ENCODE measurements at regions of chr10 and their contacts with region 1.

Region 1: DNA sequence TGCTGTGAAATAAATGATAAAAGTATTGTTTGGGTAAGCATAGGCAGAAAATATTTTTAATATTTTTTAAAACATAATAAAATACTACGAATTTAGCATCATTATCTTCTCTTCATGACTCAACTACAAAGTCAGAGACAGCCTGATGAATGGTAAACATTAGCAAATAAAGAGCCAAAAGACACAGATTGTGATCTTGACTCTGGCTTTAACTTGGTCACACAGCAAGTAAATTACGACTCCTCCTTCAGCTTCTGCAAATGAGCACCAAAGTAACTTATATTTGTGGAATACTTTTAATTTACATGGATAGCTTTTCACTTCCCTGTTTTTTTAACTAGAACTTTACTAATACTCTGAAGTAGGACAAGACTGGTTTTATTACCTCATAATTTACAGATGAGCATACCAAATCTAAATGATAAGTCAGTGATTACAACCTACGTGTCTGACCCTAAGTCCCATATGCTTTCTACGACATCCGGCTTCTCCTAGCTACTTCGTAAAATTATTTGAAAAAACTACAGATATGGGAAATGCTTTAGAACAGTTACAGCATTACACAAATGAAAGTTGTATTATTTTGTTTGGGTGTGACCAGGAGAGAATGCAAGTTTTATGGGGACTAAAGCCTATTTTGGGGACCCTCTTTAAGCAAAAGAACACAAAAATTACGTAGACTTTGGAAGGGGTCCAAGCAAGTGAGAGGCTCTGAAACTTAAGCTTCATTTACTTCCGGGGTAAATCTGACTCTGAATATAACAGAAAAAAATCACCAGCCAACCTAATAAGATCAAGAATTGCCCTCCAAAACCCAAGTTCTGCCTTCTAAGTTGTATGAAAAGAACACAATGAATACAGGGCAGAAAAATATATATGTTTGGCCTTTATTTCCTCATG is 133.8 kb downstream of the CPEB3 start:
- DNase-seq: no peak
- H3K4me3 ChIP-seq: no peak overlapping the region
- H3K27ac ChIP-seq: peak overlapping the region in 1 of 5 donors; percentile 22
- H3K4me1 ChIP-seq: peaks cover 11 to 26% of the 10 kb centered on the region in 2 donors
- H3K27me3 ChIP-seq: no peaks in the 10 kb centered on the region
- CTCF ChIP-seq: no peak
- POLR2A ChIP-seq: no peak

Region 2: GRCh38 chr10:92222603-92223275 is 65.6 kb after region 1 on chr10:
- intact Hi-C with region 1: loop called in 1 of 2 experiments (anchors 10 kb)
- DNase-seq: no peak
- H3K4me3 ChIP-seq: no peak overlapping the region
- H3K27ac ChIP-seq: peak overlapping the region in 1 of 5 donors; percentile 45
- H3K4me1 ChIP-seq: peaks cover 0 to 6% of the 10 kb centered on the region in 2 donors
- H3K27me3 ChIP-seq: no peaks in the 10 kb centered on the region
- CTCF ChIP-seq: no peak
- POLR2A ChIP-seq: no peak

Measured in adrenal gland (tissue), 19 donors.